ENCODE measurements at regions of chr12 and their contacts with region 1.

Region 1: DNA sequence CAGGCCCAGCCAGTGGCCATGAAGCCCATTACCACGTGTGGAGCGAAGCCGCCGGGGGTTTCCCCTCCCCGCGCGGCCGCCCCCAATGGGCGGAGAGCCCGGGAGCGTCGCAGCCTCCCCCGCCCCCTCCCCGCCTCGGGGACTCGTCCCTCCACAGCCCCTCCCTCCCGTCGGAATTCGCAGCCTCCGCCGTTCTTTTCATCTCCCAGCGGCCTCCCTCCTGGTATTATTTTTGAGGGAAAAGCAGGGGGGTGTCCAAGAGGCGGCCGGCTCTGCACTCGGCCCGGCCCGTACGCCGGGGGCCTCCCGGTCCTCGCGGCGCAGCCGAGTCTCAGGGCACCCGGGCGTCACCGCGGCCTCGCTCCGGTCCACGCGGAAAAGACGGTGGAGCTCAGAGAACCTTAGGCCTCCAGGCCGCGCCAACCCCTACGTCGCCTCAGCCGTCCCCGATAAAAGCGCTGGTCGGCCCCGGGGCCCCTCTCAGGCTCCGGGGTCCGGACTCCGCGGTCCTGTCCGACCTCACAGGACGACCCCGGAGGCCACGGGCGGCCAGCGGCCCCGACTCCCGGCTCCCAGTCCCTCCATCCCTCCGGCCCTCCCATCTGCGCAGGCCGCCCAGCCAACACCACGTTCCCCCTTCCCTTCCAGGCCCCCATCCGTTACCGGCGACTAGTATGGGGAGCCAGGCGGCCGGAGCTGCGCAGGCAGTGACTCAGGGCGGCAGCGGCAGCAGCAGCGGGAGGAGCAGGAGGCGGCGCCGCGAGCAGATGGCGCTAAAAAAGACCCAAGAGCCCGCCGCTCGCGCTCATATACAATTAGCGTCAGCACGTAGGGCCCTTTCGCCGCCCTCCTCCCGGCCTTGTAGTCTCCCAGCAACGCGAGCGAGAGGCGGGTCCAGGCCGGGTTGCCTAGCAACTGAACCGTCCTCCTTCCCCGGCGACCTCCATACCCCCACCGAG is at the start of gene NAP1L1:
- DNase-seq: peak; percentile 94 to 98 (median 96)
- ATAC-seq: peak; percentile 85
- H3K4me3 ChIP-seq: peak within 1 kb of the TSS; percentile 72
- H3K4me3 Mint-ChIP-seq: peak within 1 kb of the TSS; percentile 100
- H3K27ac ChIP-seq: peak within 1 kb of the TSS; percentile 96 to 99
- H3K27ac Mint-ChIP-seq: peak within 1 kb of the TSS; percentile 98
- H3K4me1 ChIP-seq: peaks cover 28% of the 10 kb centered on the region
- H3K4me1 Mint-ChIP-seq: peaks cover 60% of the 10 kb centered on the region
- H3K27me3 ChIP-seq: no peaks in the 10 kb centered on the region
- H3K27me3 Mint-ChIP-seq: no peaks in the 10 kb centered on the region
- CTCF ChIP-seq: no peak
- total RNA-seq, gene NAP1L1: 646 to 654 TPM

Region 2: GRCh38 chr12:75390899-75391538 is 693.2 kb before region 1 on chr12 and contains the start of gene GLIPR1L2:
- CTCF ChIA-PET with region 1: no interaction called
- POLR2A ChIA-PET with region 1: interaction called, 5 read pairs
- intact Hi-C with region 1: loop called in 1 of 2 experiments (anchors 5 kb)
- DNase-seq: peak; percentile 70 to 96 (median 84)
- ATAC-seq: peak; percentile 81
- H3K4me3 ChIP-seq: peak within 1 kb of the TSS; percentile 77
- H3K4me3 Mint-ChIP-seq: peak within 1 kb of the TSS; percentile 93
- H3K27ac ChIP-seq: peak within 1 kb of the TSS; percentile 64 to 91
- H3K27ac Mint-ChIP-seq: peak within 1 kb of the TSS; percentile 98
- H3K4me1 ChIP-seq: peaks cover 9% of the 10 kb centered on the region
- H3K4me1 Mint-ChIP-seq: peaks cover 63% of the 10 kb centered on the region
- H3K27me3 ChIP-seq: no peaks in the 10 kb centered on the region
- H3K27me3 Mint-ChIP-seq: no peaks in the 10 kb centered on the region
- CTCF ChIP-seq: peak; percentile 66
- total RNA-seq, gene GLIPR1L2: 0.44 to 0.56 TPM

Region 3: DNA sequence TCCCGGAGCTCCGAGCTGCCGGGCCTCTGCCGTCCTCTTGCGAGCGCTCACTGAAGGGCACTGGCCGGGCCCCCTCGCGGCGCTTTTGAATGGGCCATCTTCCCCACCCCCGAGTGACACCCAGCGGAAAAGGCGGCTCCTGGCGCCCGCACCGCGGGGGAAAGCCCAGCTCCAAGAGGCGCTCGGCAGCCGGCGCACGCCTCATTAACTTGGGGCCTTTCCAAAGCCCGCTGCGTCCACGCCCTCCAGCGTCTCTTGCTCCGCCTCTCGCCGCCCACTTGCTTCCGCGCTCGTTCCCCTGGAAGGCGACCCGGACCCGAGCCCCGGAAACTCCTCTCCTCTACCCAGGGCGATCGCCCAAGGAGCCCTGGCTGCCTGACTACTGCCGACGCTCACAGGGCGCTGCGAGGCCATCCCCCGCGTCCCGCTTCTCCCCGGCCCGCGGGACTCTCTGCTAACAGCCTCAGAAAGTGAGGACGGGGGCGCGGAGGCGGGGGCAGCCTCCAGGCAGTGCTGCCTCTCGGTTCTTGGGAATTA is 52.6 kb before region 1 on chr12 and contains the start of gene PHLDA1:
- CTCF ChIA-PET with region 1: no interaction called
- POLR2A ChIA-PET with region 1: interaction called, 16 read pairs
- intact Hi-C with region 1: no loop called
- DNase-seq: peak; percentile 79 to 97 (median 84)
- ATAC-seq: peak; percentile 83
- H3K4me3 ChIP-seq: peak within 1 kb of the TSS; percentile 92
- H3K4me3 Mint-ChIP-seq: peak within 1 kb of the TSS; percentile 88
- H3K27ac ChIP-seq: peak within 1 kb of the TSS; percentile 69 to 88
- H3K27ac Mint-ChIP-seq: peak within 1 kb of the TSS; percentile 87
- H3K4me1 ChIP-seq: peaks cover 26% of the 10 kb centered on the region
- H3K4me1 Mint-ChIP-seq: peaks cover 43% of the 10 kb centered on the region
- H3K27me3 ChIP-seq: no peaks in the 10 kb centered on the region
- H3K27me3 Mint-ChIP-seq: no peaks in the 10 kb centered on the region
- CTCF ChIP-seq: peak; percentile 55
- total RNA-seq, gene PHLDA1: 6.5 TPM

Region 4: GRCh38 chr12:76348079-76348901 is 264.1 kb after region 1 on chr12 and contains the start of gene BBS10:
- CTCF ChIA-PET with region 1: no interaction called
- POLR2A ChIA-PET with region 1: interaction called, 12 read pairs
- intact Hi-C with region 1: loop called (anchors 2 to 5 kb)
- DNase-seq: peak; percentile 75 to 92 (median 82)
- ATAC-seq: peak; percentile 96
- H3K4me3 ChIP-seq: peak within 1 kb of the TSS; percentile 81
- H3K4me3 Mint-ChIP-seq: peak within 1 kb of the TSS; percentile 96
- H3K27ac ChIP-seq: peak within 1 kb of the TSS; percentile 77
- H3K27ac Mint-ChIP-seq: peak within 1 kb of the TSS; percentile 95
- H3K4me1 ChIP-seq: peaks cover 15% of the 10 kb centered on the region
- H3K4me1 Mint-ChIP-seq: peaks cover 43% of the 10 kb centered on the region
- H3K27me3 ChIP-seq: no peaks in the 10 kb centered on the region
- H3K27me3 Mint-ChIP-seq: no peaks in the 10 kb centered on the region
- CTCF ChIP-seq: peak; percentile 33
- total RNA-seq, gene BBS10: 1.4 TPM

Region 5: DNA sequence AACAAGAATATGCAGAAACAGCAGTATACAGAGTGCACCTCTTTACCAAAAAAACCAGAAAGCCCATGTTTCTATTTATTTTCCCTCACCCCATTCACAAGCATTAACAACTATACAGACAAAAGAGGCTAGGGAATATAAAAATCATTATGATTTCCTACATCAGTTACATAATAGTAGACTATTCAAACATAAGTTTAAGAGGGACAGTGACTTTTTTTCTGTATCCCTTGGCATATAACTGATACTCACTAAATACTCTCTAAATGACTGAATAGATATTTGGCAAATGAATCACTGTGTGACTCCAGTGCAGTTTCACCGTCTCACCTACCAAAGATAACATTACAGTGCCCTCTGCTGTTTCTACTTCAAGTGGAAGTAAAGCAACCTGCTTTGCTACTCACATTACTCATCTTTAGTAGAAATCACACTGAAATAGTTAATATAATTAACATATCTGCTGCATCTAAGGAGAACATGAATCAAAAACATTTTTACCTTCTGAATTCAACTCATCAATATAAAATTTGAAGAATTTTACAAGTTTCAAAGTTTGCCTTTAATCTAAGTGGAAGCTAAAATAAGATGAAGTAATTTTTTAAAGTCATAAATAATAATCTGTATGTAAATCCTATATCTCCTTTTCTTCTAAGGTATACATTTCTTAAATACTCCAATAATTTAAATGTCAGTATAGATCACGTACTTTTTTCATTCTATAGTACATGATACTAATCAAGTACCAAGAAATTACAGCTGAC is 371.6 kb after region 1 on chr12:
- CTCF ChIA-PET with region 1: no interaction called
- POLR2A ChIA-PET with region 1: interaction called, 8 read pairs
- intact Hi-C with region 1: loop called (anchors 5 to 10 kb)
- DNase-seq: peak in 6 of 14 experiments; percentile 2 to 69 (median 40)
- ATAC-seq: peak; percentile 72
- H3K4me3 ChIP-seq: no peak overlapping the region
- H3K4me3 Mint-ChIP-seq: no peak overlapping the region
- H3K27ac ChIP-seq: no peak overlapping the region
- H3K27ac Mint-ChIP-seq: peak overlapping the region; percentile 84
- H3K4me1 ChIP-seq: peaks cover 14% of the 10 kb centered on the region
- H3K4me1 Mint-ChIP-seq: peaks cover 68% of the 10 kb centered on the region
- H3K27me3 ChIP-seq: no peaks in the 10 kb centered on the region
- H3K27me3 Mint-ChIP-seq: no peaks in the 10 kb centered on the region
- CTCF ChIP-seq: peak; percentile 71

Region 6: DNA sequence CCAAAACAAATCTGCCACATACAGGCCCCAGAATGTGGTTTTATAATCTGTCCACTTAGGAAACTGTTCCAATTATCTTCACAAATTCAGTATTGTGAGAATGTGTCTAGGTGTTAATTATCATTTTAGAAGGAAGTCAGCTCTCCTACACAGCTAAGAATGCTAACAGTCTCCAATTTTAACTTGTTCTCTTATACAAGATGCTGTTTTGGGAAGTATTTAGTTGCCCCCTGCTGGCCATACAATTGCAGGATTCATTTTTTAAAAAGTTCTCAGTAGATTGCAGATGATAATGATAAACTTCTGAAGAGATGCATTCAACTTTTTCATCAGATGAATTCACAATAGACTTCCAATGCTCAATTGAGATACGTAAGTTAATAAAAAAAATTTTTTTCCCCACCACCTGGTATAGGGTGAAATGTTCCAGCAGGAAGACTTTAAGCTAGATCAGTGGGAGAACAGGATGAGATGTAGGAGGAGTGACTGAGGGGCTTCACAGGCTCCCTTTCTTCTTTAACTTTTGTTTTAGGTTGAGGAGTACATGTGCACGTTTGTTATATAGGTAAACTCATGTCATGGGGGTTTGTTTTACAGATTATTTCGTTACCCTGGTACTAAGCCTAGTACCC is 502.7 kb after region 1 on chr12:
- CTCF ChIA-PET with region 1: no interaction called
- POLR2A ChIA-PET with region 1: interaction called, 3 read pairs
- intact Hi-C with region 1: loop called in 1 of 2 experiments (anchors 2 kb)
- DNase-seq: peak in 12 of 14 experiments; percentile 4 to 74 (median 15)
- ATAC-seq: peak; percentile 83
- H3K4me3 ChIP-seq: no peak overlapping the region
- H3K4me3 Mint-ChIP-seq: no peak overlapping the region
- H3K27ac ChIP-seq: no peak overlapping the region
- H3K27ac Mint-ChIP-seq: no peak overlapping the region
- H3K4me1 ChIP-seq: no peaks in the 10 kb centered on the region
- H3K4me1 Mint-ChIP-seq: peaks cover 4% of the 10 kb centered on the region
- H3K27me3 ChIP-seq: no peaks in the 10 kb centered on the region
- H3K27me3 Mint-ChIP-seq: no peaks in the 10 kb centered on the region
- CTCF ChIP-seq: peak; percentile 86

Measured in CD4-positive, alpha-beta T cell (primary cell).